Activated naive CD4-positive, alpha-beta T cell treated with anti-CD3 and anti-CD28 coated beads, Interleukin-2, amount 10 ng/mL, durations not matched to agents 7 days and 5 days (primary cell): ENCODE measurements at regions of chr6 and their contacts with region 1.

Region 1: GRCh38 chr6:3977875-3978711 is 100.8 kb downstream of the FAM217A start:
- DNase-seq: peak; percentile 61
- H3K4me3 Mint-ChIP-seq: no peak overlapping the region
- H3K27ac Mint-ChIP-seq: no peak overlapping the region
- H3K4me1 Mint-ChIP-seq: peaks cover 7% of the 10 kb centered on the region
- H3K27me3 Mint-ChIP-seq: peaks cover 29% of the 10 kb centered on the region

Region 2: GRCh38 chr6:3742426-3743344 is 235.4 kb before region 1 on chr6:
- CTCF ChIA-PET with region 1: interaction called, 52 read pairs
- DNase-seq: peak; percentile 89
- H3K4me3 Mint-ChIP-seq: no peak overlapping the region
- H3K27ac Mint-ChIP-seq: peak overlapping the region; percentile 49
- H3K4me1 Mint-ChIP-seq: peaks cover 13% of the 10 kb centered on the region
- H3K27me3 Mint-ChIP-seq: peaks cover 53% of the 10 kb centered on the region

Region 3: DNA sequence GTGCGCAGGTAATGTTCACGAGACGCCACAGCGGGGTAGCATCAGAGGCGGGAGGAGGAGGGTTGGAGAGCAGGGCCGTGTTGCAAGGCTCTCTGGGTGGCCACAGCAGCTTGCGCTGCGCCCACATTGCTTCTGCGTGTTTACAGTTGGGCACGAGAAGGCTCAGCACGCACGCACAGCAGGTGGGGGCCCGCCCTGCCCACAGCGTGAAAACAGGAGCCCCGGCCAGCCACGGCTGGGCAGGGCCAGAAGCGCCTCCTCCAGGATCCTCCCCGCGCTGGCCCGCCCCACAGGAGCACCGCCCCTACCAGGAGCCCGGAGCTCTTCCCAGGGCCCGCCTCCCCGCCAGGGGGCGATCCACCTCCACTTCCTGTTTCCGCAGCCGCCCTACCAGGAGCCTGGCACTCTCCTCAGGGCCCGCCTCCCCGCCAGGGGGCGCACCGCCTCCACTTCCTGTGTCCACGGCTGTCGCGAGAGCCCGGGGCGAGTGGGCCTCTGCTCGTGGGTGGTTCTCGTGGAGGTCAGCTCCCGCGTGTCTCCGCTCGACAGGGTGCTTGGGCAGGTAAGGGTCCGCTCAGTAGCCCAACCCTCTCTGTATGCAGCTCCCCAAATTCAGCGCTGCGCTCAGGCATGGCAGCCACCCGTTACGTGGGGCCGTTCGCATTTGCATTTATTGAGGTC is 129.0 kb before region 1 on chr6 and contains the start of gene FAM50B:
- CTCF ChIA-PET with region 1: interaction called, 10 read pairs
- DNase-seq: peak; percentile 94
- H3K4me3 Mint-ChIP-seq: peak within 1 kb of the TSS; percentile 76
- H3K27ac Mint-ChIP-seq: peak within 1 kb of the TSS; percentile 73
- H3K4me1 Mint-ChIP-seq: peaks cover 25% of the 10 kb centered on the region
- H3K27me3 Mint-ChIP-seq: no peaks in the 10 kb centered on the region

Region 4: DNA sequence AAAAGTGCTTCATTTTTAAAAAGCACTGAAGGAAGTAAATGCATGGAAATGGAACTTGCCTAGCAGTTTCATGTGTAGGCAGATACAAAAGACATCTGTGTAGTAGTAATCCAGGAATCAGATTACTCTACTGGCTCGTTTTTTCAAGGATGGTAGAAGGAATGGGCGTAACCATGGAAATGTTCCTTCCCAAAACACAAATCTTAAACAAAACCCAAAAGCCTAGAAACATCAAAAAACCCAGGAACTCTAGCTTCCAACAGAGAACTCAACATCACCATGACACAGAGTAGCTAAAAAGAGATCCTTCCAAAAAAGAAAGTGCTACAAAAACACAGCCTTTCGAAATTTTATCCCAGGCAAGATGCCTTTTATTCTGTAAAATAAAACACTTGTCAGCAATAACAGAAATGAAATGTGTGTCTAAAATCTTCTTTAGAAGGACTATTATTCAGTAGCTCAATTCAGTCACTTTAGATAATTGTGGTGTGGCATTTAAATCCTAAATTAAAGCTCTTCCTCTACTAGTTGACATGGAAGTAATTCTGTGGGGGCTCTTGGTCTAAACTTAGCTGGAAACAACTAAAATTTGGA is 19.2 kb after region 1 on chr6:
- CTCF ChIA-PET with region 1: interaction called, 14 read pairs
- DNase-seq: no peak
- H3K4me3 Mint-ChIP-seq: no peak overlapping the region
- H3K27ac Mint-ChIP-seq: no peak overlapping the region
- H3K4me1 Mint-ChIP-seq: no peaks in the 10 kb centered on the region
- H3K27me3 Mint-ChIP-seq: no peaks in the 10 kb centered on the region

Region 5: GRCh38 chr6:4192173-4192572 is 214.1 kb after region 1 on chr6:
- CTCF ChIA-PET with region 1: no interaction called
- DNase-seq: no peak
- H3K4me3 Mint-ChIP-seq: no peak overlapping the region
- H3K27ac Mint-ChIP-seq: no peak overlapping the region
- H3K4me1 Mint-ChIP-seq: no peaks in the 10 kb centered on the region
- H3K27me3 Mint-ChIP-seq: no peaks in the 10 kb centered on the region